Mammary epithelial cell (primary cell): ENCODE measurements at regions of chr1 and their contacts with region 1.

Region 1: DNA sequence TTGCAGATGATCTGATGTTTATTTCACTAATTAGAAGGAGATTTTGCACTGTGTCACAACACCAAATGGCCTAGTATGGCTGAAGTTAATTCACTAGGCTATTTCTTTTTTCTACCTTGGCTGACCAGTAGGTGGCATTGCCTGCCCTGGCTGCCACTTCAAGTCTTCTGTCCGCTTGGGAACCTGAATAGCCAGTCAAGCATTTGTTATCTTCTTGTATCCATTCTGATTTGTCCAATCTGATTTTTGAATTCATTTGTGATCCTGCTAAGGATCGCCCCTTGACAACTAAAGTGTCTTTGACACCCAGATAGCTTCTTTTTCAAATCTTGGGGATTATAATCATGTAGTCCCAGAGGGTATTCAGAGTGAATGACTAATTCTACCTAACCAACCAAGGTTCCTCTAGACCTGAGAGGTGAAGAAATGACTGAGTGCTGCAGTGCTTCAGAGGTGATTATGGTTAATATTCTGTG is 99.4 kb downstream of the GIPC2 start:
- DNase-seq: peak; percentile 63
- H3K4me3 ChIP-seq: no peak overlapping the region
- H3K27ac ChIP-seq: no peak overlapping the region
- H3K4me1 ChIP-seq: no peaks in the 10 kb centered on the region
- H3K27me3 ChIP-seq: no peaks in the 10 kb centered on the region
- CTCF ChIP-seq: peak; percentile 86 to 88

Region 2: DNA sequence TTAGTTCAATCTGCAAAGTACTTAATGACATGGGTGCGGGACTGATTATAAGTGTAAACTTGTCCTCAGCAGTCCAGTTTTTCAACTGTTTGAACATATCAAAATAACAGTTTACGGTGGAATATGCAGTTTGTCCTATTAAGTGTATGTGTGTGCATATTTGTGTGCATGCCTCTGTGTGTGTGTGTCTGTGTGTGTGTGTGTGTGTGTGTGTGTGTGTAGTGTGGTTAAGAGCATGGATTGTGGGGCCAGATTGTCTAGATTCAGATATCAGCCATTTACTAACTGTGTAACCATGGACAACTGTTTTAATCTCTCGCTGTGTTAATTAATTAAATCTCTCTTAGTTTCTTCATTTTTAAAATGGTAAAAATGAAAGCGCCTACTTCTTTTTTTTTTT is 217.7 kb before region 1 on chr1:
- CTCF ChIA-PET with region 1: no interaction called
- dilution Hi-C with region 1: no loop called
- in situ Hi-C with region 1: no loop called
- intact Hi-C with region 1: no loop called
- DNase-seq: no peak
- H3K4me3 ChIP-seq: no peak overlapping the region
- H3K27ac ChIP-seq: no peak overlapping the region
- H3K4me1 ChIP-seq: no peaks in the 10 kb centered on the region
- H3K27me3 ChIP-seq: no peaks in the 10 kb centered on the region
- CTCF ChIP-seq: no peak

Region 3: GRCh38 chr1:78156805-78157521 is 11.8 kb after region 1 on chr1:
- CTCF ChIA-PET with region 1: no interaction called
- dilution Hi-C with region 1: no loop called
- in situ Hi-C with region 1: no loop called
- intact Hi-C with region 1: no loop called
- DNase-seq: peak; percentile 20
- H3K4me3 ChIP-seq: no peak overlapping the region
- H3K27ac ChIP-seq: no peak overlapping the region
- H3K4me1 ChIP-seq: peaks cover 14% of the 10 kb centered on the region
- H3K27me3 ChIP-seq: no peaks in the 10 kb centered on the region
- CTCF ChIP-seq: no peak

Region 4: GRCh38 chr1:78237364-78237916 is 92.3 kb after region 1 on chr1:
- CTCF ChIA-PET with region 1: no interaction called
- dilution Hi-C with region 1: no loop called
- in situ Hi-C with region 1: no loop called
- intact Hi-C with region 1: loop called (anchors 5 kb)
- DNase-seq: peak; percentile 88
- H3K4me3 ChIP-seq: no peak overlapping the region
- H3K27ac ChIP-seq: no peak overlapping the region
- H3K4me1 ChIP-seq: peaks cover 17% of the 10 kb centered on the region
- H3K27me3 ChIP-seq: no peaks in the 10 kb centered on the region
- CTCF ChIP-seq: no peak

Region 5: GRCh38 chr1:78351551-78352216 is 206.5 kb after region 1 on chr1:
- CTCF ChIA-PET with region 1: no interaction called
- dilution Hi-C with region 1: no loop called
- in situ Hi-C with region 1: no loop called
- intact Hi-C with region 1: loop called (anchors 2 kb)
- DNase-seq: no peak
- H3K4me3 ChIP-seq: no peak overlapping the region
- H3K27ac ChIP-seq: no peak overlapping the region
- H3K4me1 ChIP-seq: no peaks in the 10 kb centered on the region
- H3K27me3 ChIP-seq: no peaks in the 10 kb centered on the region
- CTCF ChIP-seq: no peak

Region 6: GRCh38 chr1:78385744-78386462 is 240.8 kb after region 1 on chr1:
- CTCF ChIA-PET with region 1: no interaction called
- dilution Hi-C with region 1: no loop called
- in situ Hi-C with region 1: no loop called
- intact Hi-C with region 1: no loop called
- DNase-seq: no peak
- H3K4me3 ChIP-seq: no peak overlapping the region
- H3K27ac ChIP-seq: no peak overlapping the region
- H3K4me1 ChIP-seq: no peaks in the 10 kb centered on the region
- H3K27me3 ChIP-seq: peaks cover 5% of the 10 kb centered on the region
- CTCF ChIP-seq: no peak

Region 7: DNA sequence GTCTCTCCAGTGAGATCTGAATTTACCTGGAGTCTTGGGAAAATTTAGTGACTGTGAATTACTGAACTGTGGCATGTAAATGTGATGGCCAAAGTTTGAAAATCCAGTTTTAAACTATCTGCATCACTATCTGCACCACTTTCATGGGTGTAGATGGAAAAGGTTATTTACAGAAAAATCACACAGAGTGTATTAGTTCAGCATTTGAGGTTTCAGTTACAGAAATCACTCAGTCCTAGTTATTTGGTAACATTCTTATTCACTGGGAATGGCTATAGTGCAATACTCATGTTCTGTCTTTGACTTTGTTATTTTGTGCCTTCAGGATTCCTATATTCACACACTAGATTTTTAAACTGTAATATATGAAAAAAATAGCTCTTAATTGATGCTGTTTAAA is 414.5 kb after region 1 on chr1:
- CTCF ChIA-PET with region 1: no interaction called
- dilution Hi-C with region 1: no loop called
- in situ Hi-C with region 1: no loop called
- intact Hi-C with region 1: loop called (anchors 5 kb)
- DNase-seq: no peak
- H3K4me3 ChIP-seq: no peak overlapping the region
- H3K27ac ChIP-seq: no peak overlapping the region
- H3K4me1 ChIP-seq: no peaks in the 10 kb centered on the region
- H3K27me3 ChIP-seq: no peaks in the 10 kb centered on the region
- CTCF ChIP-seq: no peak

Region 8: GRCh38 chr1:78676347-78676982 is 531.3 kb after region 1 on chr1:
- CTCF ChIA-PET with region 1: no interaction called
- dilution Hi-C with region 1: no loop called
- in situ Hi-C with region 1: no loop called
- intact Hi-C with region 1: loop called (anchors 1 kb)
- DNase-seq: peak; percentile 37
- H3K4me3 ChIP-seq: no peak overlapping the region
- H3K27ac ChIP-seq: no peak overlapping the region
- H3K4me1 ChIP-seq: no peaks in the 10 kb centered on the region
- H3K27me3 ChIP-seq: no peaks in the 10 kb centered on the region
- CTCF ChIP-seq: peak; percentile 74 to 77